ENCODE measurements at regions of chr1 and their contacts with region 1.

Region 1: GRCh38 chr1:198656500-198656932 is 17.7 kb downstream of the PTPRC start:
- DNase-seq: peak; percentile 79
- ATAC-seq: peak; percentile 72
- H3K4me3 Mint-ChIP-seq: peak overlapping the region; percentile 75
- H3K27ac Mint-ChIP-seq: peak overlapping the region; percentile 92
- H3K4me1 Mint-ChIP-seq: peaks cover 67% of the 10 kb centered on the region
- H3K27me3 Mint-ChIP-seq: no peaks in the 10 kb centered on the region

Region 2: DNA sequence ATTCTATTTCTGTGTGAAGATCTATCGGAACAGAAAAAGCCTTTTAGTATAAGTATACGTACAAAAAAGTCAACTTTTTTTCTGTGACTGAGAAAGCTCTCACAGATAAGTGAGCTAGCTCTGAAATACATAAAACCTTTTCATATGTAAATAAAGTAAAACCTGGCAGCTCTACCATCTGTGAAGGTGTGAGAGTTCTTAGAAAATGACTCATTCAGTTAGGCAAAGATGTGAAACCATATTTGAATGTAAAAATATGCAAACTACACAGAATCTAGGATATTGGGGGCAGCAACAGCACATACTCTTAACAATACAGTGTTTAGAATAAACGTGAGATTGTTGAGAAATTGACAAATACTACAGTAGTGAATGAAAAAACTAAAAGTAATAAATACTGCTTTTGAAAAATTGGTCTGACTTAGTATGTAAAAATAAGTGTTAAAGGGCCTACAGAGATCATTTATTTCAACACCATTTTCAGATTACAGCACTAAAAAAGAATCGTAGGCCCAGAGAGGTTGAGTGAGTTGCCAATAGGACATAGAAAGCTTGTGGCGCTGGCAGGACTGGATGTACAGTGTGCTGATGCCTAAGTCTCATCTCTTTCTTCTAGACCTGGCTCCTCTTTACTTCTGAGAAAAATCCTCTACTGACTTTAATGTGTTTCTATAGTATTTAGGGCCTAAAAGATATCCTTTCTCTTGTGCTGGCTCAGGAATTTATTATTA is 135.8 kb before region 1 on chr1:
- CTCF ChIA-PET with region 1: interaction called, 13 read pairs
- POLR2A ChIA-PET with region 1: interaction called, 4 read pairs
- DNase-seq: no peak
- ATAC-seq: peak; percentile 63
- H3K4me3 Mint-ChIP-seq: peak overlapping the region; percentile 71
- H3K27ac Mint-ChIP-seq: peak overlapping the region; percentile 77
- H3K4me1 Mint-ChIP-seq: peaks cover 57% of the 10 kb centered on the region
- H3K27me3 Mint-ChIP-seq: no peaks in the 10 kb centered on the region

Region 3: DNA sequence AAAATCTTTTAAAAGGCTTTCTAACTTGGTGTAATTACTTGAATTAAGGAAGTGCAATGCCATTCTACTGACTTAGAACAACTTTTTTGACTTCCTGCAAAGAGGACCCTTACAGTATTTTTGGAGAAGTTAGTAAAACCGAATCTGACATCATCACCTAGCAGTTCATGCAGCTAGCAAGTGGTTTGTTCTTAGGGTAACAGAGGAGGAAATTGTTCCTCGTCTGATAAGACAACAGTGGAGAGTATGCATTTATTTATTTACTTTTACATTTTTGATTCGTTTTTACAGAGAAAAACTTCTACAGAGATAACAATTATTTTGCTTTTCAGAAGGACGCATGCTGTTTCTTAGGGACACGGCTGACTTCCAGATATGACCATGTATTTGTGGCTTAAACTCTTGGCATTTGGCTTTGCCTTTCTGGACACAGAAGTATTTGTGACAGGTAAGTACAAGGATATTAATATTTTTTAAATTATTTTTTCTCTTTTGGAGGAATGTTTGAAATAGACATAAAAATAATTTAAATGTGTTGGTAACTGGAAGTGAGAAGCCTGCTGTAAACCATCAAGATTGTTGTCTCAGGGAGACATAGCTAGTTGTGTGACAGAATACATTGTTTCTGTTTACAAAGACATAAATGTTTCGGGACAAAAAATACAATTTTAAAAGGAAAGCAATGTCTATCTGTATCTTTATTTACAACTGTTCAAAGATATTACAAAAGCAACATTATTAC is 17.5 kb before region 1 on chr1 and contains the start of gene PTPRC:
- CTCF ChIA-PET with region 1: no interaction called
- POLR2A ChIA-PET with region 1: interaction called, 90 read pairs
- DNase-seq: peak; percentile 65
- ATAC-seq: peak; percentile 62
- H3K4me3 Mint-ChIP-seq: peak within 1 kb of the TSS; percentile 83
- H3K27ac Mint-ChIP-seq: peak within 1 kb of the TSS; percentile 97
- H3K4me1 Mint-ChIP-seq: peaks cover 48% of the 10 kb centered on the region
- H3K27me3 Mint-ChIP-seq: no peaks in the 10 kb centered on the region
- total RNA-seq, gene PTPRC: 604 to 619 TPM

Region 4: DNA sequence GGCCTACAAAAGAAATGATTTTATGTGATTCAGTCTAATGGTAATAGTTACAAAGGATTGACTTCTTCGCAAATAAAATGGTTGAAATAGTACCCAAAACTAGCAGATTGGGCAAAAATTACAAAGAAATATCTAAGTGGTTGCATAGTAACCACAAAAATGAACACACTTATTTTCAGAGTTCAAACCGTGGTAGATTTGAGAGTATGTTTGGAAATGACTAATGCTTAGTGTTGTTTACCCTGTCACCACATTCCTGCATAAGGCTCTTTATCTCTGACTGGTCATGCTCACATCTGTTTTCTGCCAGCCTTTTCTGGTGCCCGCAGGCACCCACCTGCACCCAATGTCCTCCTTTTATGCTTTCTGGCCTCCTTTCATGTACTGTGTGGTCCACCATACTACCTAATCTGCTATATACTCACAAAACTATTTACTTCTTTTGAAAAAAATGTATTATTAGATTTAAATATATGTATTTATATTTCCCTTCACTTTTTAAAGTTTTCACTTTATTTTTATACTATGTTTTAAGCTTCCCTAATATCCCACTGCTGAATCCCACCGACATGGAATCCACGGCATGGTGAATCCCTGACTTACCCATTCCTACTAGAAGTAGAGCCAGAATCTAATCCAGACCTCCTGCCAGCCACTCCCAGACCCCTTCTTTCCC is 12.6 kb after region 1 on chr1:
- CTCF ChIA-PET with region 1: interaction called, 6 read pairs
- POLR2A ChIA-PET with region 1: interaction called, 15 read pairs
- DNase-seq: peak; percentile 52
- ATAC-seq: peak; percentile 79
- H3K4me3 Mint-ChIP-seq: peak overlapping the region; percentile 21
- H3K27ac Mint-ChIP-seq: peak overlapping the region; percentile 80
- H3K4me1 Mint-ChIP-seq: peaks cover 84% of the 10 kb centered on the region
- H3K27me3 Mint-ChIP-seq: no peaks in the 10 kb centered on the region

Region 5: DNA sequence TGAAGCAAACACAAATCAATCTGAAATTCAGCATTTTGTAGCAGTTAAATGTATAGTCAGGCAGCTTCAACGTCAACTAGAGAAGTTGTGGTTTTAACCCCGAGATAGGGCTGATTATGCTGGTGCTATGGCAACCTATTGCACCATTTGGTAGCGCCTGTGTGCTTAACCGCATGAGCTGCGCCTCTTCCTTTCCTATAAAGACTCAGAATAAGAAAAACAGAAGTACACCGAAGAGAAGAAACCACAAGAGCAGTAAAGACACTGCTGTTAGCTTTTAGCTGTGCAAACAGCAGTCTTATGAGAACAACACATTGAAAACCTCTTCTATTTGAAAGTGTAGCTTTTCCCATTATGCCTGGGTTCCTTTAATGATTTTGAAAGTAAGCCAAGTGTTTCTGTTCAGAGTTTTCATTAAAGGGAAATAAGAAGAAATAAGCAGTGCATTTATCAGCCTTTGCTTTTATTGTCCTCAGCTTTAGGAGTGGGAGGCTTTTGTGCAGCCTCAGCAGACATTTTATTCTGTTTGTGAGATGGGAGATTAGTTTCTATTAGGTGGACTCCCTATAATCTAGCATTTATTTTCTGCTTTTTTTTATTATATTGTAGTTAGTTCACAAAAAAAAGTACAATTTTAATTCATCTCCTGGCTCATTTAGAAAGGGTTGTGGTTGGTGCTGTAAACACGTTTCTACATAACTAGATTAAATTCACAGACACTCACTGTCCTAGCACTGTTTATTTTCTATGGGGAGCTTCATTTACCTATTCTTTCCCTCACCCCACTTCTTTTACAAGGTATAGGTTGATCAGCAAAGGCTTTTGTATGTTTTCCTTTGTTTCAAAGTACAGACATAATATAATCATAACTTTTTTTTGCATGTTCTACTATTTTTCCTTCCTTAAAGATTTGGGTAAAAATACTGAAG is 25.6 kb after region 1 on chr1:
- CTCF ChIA-PET with region 1: interaction called, 17 read pairs
- POLR2A ChIA-PET with region 1: interaction called, 36 read pairs
- DNase-seq: peak; percentile 94
- ATAC-seq: peak; percentile 76
- H3K4me3 Mint-ChIP-seq: peak overlapping the region; percentile 74
- H3K27ac Mint-ChIP-seq: peak overlapping the region; percentile 96
- H3K4me1 Mint-ChIP-seq: peaks cover 84% of the 10 kb centered on the region
- H3K27me3 Mint-ChIP-seq: no peaks in the 10 kb centered on the region

Region 6: GRCh38 chr1:198986036-198986435 is 329.5 kb after region 1 on chr1:
- CTCF ChIA-PET with region 1: no interaction called
- POLR2A ChIA-PET with region 1: no interaction called
- DNase-seq: no peak
- ATAC-seq: no peak
- H3K4me3 Mint-ChIP-seq: no peak overlapping the region
- H3K27ac Mint-ChIP-seq: no peak overlapping the region
- H3K4me1 Mint-ChIP-seq: peaks cover 3% of the 10 kb centered on the region
- H3K27me3 Mint-ChIP-seq: no peaks in the 10 kb centered on the region

Measured in activated CD8-positive, alpha-beta T cell treated with anti-CD3 and anti-CD28 coated beads, Interleukin-2, amount 10 ng/mL, durations not matched to agents 7 days and 5 days (primary cell).